Naive thymus-derived CD8-positive, alpha-beta T cell (primary cell): ENCODE measurements at regions of chr11 and their contacts with region 1.

Region 1: GRCh38 chr11:119067371-119068222 is at the start of gene VPS11:
- DNase-seq: peak; percentile 93 to 98 (median 97)
- ATAC-seq: peak; percentile 93 to 96
- H3K4me3 Mint-ChIP-seq: peak within 1 kb of the TSS; percentile 88 to 100 (median 96)
- H3K27ac Mint-ChIP-seq: peak within 1 kb of the TSS; percentile 96 to 100 (median 99)
- H3K4me1 Mint-ChIP-seq: peaks cover 15 to 60% (median 39%) of the 10 kb centered on the region in 4 donors
- H3K27me3 Mint-ChIP-seq: no peaks in the 10 kb centered on the region
- polyA plus RNA-seq, gene VPS11: 43.2 to 58.4 (median 44.8) TPM

Region 2: GRCh38 chr11:118997627-118998387 is 69.8 kb before region 1 on chr11 and contains the start of gene CENATAC:
- POLR2A ChIA-PET with region 1: interaction called, 12 read pairs
- DNase-seq: peak; percentile 90 to 96 (median 94)
- ATAC-seq: peak; percentile 93
- H3K4me3 Mint-ChIP-seq: peak within 1 kb of the TSS; percentile 88 to 99 (median 98)
- H3K27ac Mint-ChIP-seq: peak within 1 kb of the TSS; percentile 89 to 99 (median 97)
- H3K4me1 Mint-ChIP-seq: peaks cover 13 to 48% (median 45%) of the 10 kb centered on the region in 4 donors
- H3K27me3 Mint-ChIP-seq: no peaks in the 10 kb centered on the region
- polyA plus RNA-seq, gene CENATAC: 6.1 to 9.1 (median 8.7) TPM

Region 3: GRCh38 chr11:119057000-119057769 is 10.4 kb before region 1 on chr11 and contains the start of gene HYOU1:
- POLR2A ChIA-PET with region 1: interaction called, 45 read pairs
- DNase-seq: peak; percentile 92 to 100 (median 98)
- ATAC-seq: peak; percentile 90 to 93
- H3K4me3 Mint-ChIP-seq: peak within 1 kb of the TSS; percentile 91 to 99 (median 96)
- H3K27ac Mint-ChIP-seq: peak within 1 kb of the TSS; percentile 93 to 99 (median 97)
- H3K4me1 Mint-ChIP-seq: peaks cover 18 to 47% (median 36%) of the 10 kb centered on the region in 4 donors
- H3K27me3 Mint-ChIP-seq: no peaks in the 10 kb centered on the region
- polyA plus RNA-seq, gene HYOU1: 14.1 to 17.1 (median 15.8) TPM

Region 4: DNA sequence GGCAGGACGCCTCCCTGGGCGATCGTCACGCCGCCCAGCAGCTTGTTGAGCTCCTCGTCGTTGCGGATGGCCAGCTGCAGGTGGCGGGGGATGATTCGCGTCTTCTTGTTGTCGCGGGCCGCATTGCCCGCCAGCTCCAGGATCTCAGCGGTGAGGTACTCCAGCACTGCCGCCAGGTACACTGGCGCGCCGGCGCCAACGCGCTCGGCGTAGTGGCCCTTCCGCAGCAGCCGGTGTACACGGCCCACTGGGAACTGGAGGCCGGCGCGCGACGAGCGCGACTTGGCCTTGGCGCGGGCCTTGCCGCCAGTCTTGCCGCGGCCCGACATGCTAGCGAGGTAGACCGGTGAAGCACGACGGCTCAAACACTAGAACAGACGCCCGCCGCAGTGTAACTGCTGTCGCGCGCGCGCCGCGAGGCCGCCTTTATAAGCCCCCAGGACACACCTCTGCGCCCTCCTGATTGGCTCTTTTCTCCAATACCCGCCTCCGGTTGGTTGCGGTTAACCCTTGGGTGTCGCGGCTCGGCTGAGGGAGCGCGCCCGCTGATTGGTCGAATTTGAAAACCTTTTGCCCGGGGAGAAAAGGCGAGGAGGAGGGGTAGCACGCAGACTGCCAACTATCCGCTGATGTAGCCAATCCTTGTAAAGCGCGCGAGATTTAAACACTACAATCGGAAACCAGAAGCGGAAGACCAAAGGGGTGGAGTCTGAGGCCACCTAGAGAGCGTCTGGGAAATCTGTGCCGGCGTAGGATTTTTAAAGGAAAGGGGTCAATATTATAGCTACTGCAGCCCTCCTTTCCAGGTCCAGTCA is 27.7 kb after region 1 on chr11:
- POLR2A ChIA-PET with region 1: interaction called, 37 read pairs
- DNase-seq: peak; percentile 96 to 100 (median 100)
- ATAC-seq: peak; percentile 88 to 91
- H3K4me3 Mint-ChIP-seq: peak overlapping the region; percentile 89 to 95 (median 92)
- H3K27ac Mint-ChIP-seq: peak overlapping the region; percentile 79 to 98 (median 93)
- H3K4me1 Mint-ChIP-seq: peaks cover 24 to 42% (median 37%) of the 10 kb centered on the region in 4 donors
- H3K27me3 Mint-ChIP-seq: peaks cover 0 to 3% (median 0%) of the 10 kb centered on the region in 5 donors

Region 5: GRCh38 chr11:119115484-119116234 is 48.1 kb after region 1 on chr11:
- POLR2A ChIA-PET with region 1: interaction called, 17 read pairs
- DNase-seq: peak in 5 of 10 donors; percentile 29 to 74 (median 57)
- ATAC-seq: peak; percentile 89 to 95
- H3K4me3 Mint-ChIP-seq: peak overlapping the region; percentile 79 to 91 (median 85)
- H3K27ac Mint-ChIP-seq: peak overlapping the region; percentile 92 to 99 (median 98)
- H3K4me1 Mint-ChIP-seq: peaks cover 25 to 54% (median 38%) of the 10 kb centered on the region in 4 donors
- H3K27me3 Mint-ChIP-seq: no peaks in the 10 kb centered on the region